Naive thymus-derived CD4-positive, alpha-beta T cell (primary cell): ENCODE measurements at regions of chr4 and their contacts with region 1.

Region 1: GRCh38 chr4:121656269-121656641 is 40.5 kb downstream of the ANXA5 start:
- DNase-seq: peak in 3 of 9 donors; percentile 2 to 12 (median 7)
- ATAC-seq: peak; percentile 64
- H3K4me3 ChIP-seq: no peak overlapping the region
- H3K4me3 Mint-ChIP-seq: no peak overlapping the region
- H3K27ac ChIP-seq: no peak overlapping the region
- H3K27ac Mint-ChIP-seq: peak overlapping the region in 2 of 9 donors; percentile 22 to 34
- H3K4me1 ChIP-seq: no peaks in the 10 kb centered on the region
- H3K4me1 Mint-ChIP-seq: peaks cover 0 to 5% (median 0%) of the 10 kb centered on the region in 7 donors
- H3K27me3 ChIP-seq: no peaks in the 10 kb centered on the region
- H3K27me3 Mint-ChIP-seq: peaks cover 0 to 26% (median 4%) of the 10 kb centered on the region in 5 donors

Region 2: GRCh38 chr4:121484633-121485032 is 171.6 kb before region 1 on chr4:
- CTCF ChIA-PET with region 1: no interaction called
- POLR2A ChIA-PET with region 1: no interaction called
- intact Hi-C with region 1: loop called in 1 of 2 experiments (anchors 5 kb)
- DNase-seq: peak in 1 of 9 donors; percentile 10
- ATAC-seq: peak; percentile 60
- H3K4me3 ChIP-seq: no peak overlapping the region
- H3K4me3 Mint-ChIP-seq: no peak overlapping the region
- H3K27ac ChIP-seq: no peak overlapping the region
- H3K27ac Mint-ChIP-seq: no peak overlapping the region
- H3K4me1 ChIP-seq: no peaks in the 10 kb centered on the region
- H3K4me1 Mint-ChIP-seq: no peaks in the 10 kb centered on the region
- H3K27me3 ChIP-seq: no peaks in the 10 kb centered on the region
- H3K27me3 Mint-ChIP-seq: peaks cover 22 to 41% (median 37%) of the 10 kb centered on the region in 5 donors